ENCODE measurements at regions of chr1 and their contacts with region 1.

Region 1: GRCh38 chr1:66764994-66765578 is 12.8 kb downstream of the DYNLT5 start:
- DNase-seq: peak in 12 of 14 experiments; percentile 22 to 76 (median 44)
- ATAC-seq: peak; percentile 69
- H3K4me3 ChIP-seq: no peak overlapping the region
- H3K4me3 Mint-ChIP-seq: no peak overlapping the region
- H3K27ac ChIP-seq: no peak overlapping the region
- H3K27ac Mint-ChIP-seq: no peak overlapping the region
- H3K4me1 ChIP-seq: peaks cover 2% of the 10 kb centered on the region
- H3K4me1 Mint-ChIP-seq: peaks cover 15% of the 10 kb centered on the region
- H3K27me3 ChIP-seq: no peaks in the 10 kb centered on the region
- H3K27me3 Mint-ChIP-seq: no peaks in the 10 kb centered on the region
- CTCF ChIP-seq: peak; percentile 86

Region 2: GRCh38 chr1:66831529-66832239 is 66.6 kb after region 1 on chr1:
- CTCF ChIA-PET with region 1: no interaction called
- POLR2A ChIA-PET with region 1: no interaction called
- intact Hi-C with region 1: loop called in 1 of 2 experiments (anchors 10 kb)
- DNase-seq: no peak
- ATAC-seq: no peak
- H3K4me3 ChIP-seq: no peak overlapping the region
- H3K4me3 Mint-ChIP-seq: no peak overlapping the region
- H3K27ac ChIP-seq: no peak overlapping the region
- H3K27ac Mint-ChIP-seq: no peak overlapping the region
- H3K4me1 ChIP-seq: no peaks in the 10 kb centered on the region
- H3K4me1 Mint-ChIP-seq: no peaks in the 10 kb centered on the region
- H3K27me3 ChIP-seq: no peaks in the 10 kb centered on the region
- H3K27me3 Mint-ChIP-seq: no peaks in the 10 kb centered on the region
- CTCF ChIP-seq: no peak

Region 3: GRCh38 chr1:66929999-66930822 is 165.1 kb after region 1 on chr1:
- CTCF ChIA-PET with region 1: no interaction called
- POLR2A ChIA-PET with region 1: interaction called, 15 read pairs
- intact Hi-C with region 1: loop called (anchors 5 to 10 kb)
- DNase-seq: peak; percentile 88 to 98 (median 94)
- ATAC-seq: peak; percentile 66
- H3K4me3 ChIP-seq: peak overlapping the region; percentile 93
- H3K4me3 Mint-ChIP-seq: peak overlapping the region; percentile 91
- H3K27ac ChIP-seq: peak overlapping the region; percentile 87 to 88
- H3K27ac Mint-ChIP-seq: peak overlapping the region; percentile 84
- H3K4me1 ChIP-seq: peaks cover 18% of the 10 kb centered on the region
- H3K4me1 Mint-ChIP-seq: peaks cover 74% of the 10 kb centered on the region
- H3K27me3 ChIP-seq: no peaks in the 10 kb centered on the region
- H3K27me3 Mint-ChIP-seq: no peaks in the 10 kb centered on the region
- CTCF ChIP-seq: peak; percentile 52

Region 4: GRCh38 chr1:66981679-66982078 is 216.6 kb after region 1 on chr1:
- CTCF ChIA-PET with region 1: no interaction called
- POLR2A ChIA-PET with region 1: interaction called, 3 read pairs
- intact Hi-C with region 1: loop called in 1 of 2 experiments (anchors 5 kb)
- DNase-seq: peak; percentile 18 to 87 (median 42)
- ATAC-seq: peak; percentile 93
- H3K4me3 ChIP-seq: peak overlapping the region; percentile 52
- H3K4me3 Mint-ChIP-seq: peak overlapping the region; percentile 66
- H3K27ac ChIP-seq: peak overlapping the region; percentile 5 to 78
- H3K27ac Mint-ChIP-seq: peak overlapping the region; percentile 89
- H3K4me1 ChIP-seq: no peaks in the 10 kb centered on the region
- H3K4me1 Mint-ChIP-seq: peaks cover 40% of the 10 kb centered on the region
- H3K27me3 ChIP-seq: no peaks in the 10 kb centered on the region
- H3K27me3 Mint-ChIP-seq: no peaks in the 10 kb centered on the region
- CTCF ChIP-seq: no peak

Region 5: DNA sequence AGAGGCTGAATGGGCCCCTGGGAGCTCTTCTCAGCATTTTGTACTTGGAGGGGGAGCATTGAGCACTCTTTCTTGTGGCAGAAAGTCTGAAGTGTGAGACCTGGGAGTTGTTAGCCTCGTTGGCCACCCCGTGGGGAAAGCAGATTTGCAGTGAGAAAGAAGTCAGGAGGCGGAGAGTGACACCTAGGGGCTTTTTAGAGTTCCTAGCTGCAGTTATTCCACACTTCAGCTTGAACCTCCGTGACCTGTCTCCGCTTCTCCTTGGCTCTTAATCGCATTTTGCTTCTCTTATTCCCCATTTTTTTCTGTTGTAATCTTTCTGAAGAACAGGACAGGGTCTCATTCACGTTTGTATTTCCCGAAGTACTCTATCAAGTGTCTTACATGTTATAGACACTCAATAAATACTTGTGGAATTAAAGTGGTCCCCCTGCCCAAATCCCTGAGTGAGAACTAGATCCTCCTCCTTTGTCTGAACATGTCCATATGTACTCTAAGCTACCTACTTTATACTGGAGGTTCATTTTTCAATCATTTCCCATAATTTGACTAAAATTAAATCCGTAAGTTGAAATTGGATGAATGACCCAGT is 384.2 kb after region 1 on chr1:
- CTCF ChIA-PET with region 1: interaction called, 19 read pairs
- POLR2A ChIA-PET with region 1: interaction called, 6 read pairs
- intact Hi-C with region 1: loop called (anchors 1 kb)
- DNase-seq: peak; percentile 32 to 83 (median 56)
- ATAC-seq: peak; percentile 93
- H3K4me3 ChIP-seq: no peak overlapping the region
- H3K4me3 Mint-ChIP-seq: no peak overlapping the region
- H3K27ac ChIP-seq: no peak overlapping the region
- H3K27ac Mint-ChIP-seq: no peak overlapping the region
- H3K4me1 ChIP-seq: peaks cover 9% of the 10 kb centered on the region
- H3K4me1 Mint-ChIP-seq: peaks cover 31% of the 10 kb centered on the region
- H3K27me3 ChIP-seq: no peaks in the 10 kb centered on the region
- H3K27me3 Mint-ChIP-seq: no peaks in the 10 kb centered on the region
- CTCF ChIP-seq: peak; percentile 85

Region 6: DNA sequence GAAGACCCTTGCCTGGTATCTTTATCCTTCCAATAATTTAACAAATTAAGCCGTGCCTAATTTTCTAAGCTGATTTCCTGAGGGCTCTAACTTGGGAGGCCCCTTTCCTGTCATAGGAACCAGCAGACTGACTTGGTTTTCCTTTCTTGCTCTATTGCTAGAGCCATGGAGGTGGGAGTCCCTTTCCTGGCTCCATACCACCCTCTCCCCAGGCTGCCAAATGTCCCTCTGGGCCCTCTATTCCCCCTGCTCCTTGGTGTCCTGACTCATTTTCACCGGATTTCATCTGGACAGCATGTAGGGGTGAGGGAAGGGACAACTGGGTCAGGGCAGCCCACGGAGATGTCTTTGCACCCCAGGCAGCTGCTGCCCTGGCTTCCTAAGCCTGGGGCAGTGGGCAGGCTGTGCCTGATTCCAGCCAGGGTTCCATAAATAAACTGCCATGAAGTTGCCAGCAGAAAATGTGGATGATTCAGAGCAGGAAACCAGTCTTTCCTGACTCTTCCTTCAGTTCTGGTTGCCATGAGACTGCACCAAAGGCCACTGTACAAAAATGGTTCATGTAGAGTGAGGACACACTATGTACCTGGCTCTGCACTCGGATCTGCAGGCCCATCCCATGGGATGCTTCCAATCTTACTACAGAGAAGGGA is 703.1 kb after region 1 on chr1:
- CTCF ChIA-PET with region 1: no interaction called
- POLR2A ChIA-PET with region 1: no interaction called
- intact Hi-C with region 1: no loop called
- DNase-seq: no peak
- ATAC-seq: no peak
- H3K4me3 ChIP-seq: no peak overlapping the region
- H3K4me3 Mint-ChIP-seq: no peak overlapping the region
- H3K27ac ChIP-seq: no peak overlapping the region
- H3K27ac Mint-ChIP-seq: no peak overlapping the region
- H3K4me1 ChIP-seq: no peaks in the 10 kb centered on the region
- H3K4me1 Mint-ChIP-seq: no peaks in the 10 kb centered on the region
- H3K27me3 ChIP-seq: no peaks in the 10 kb centered on the region
- H3K27me3 Mint-ChIP-seq: no peaks in the 10 kb centered on the region
- CTCF ChIP-seq: no peak

Region 7: GRCh38 chr1:67500413-67500959 is 735.4 kb after region 1 on chr1:
- CTCF ChIA-PET with region 1: interaction called, 13 read pairs
- POLR2A ChIA-PET with region 1: no interaction called
- intact Hi-C with region 1: loop called (anchors 1 kb)
- DNase-seq: peak; percentile 73 to 92 (median 81)
- ATAC-seq: peak; percentile 100
- H3K4me3 ChIP-seq: no peak overlapping the region
- H3K4me3 Mint-ChIP-seq: no peak overlapping the region
- H3K27ac ChIP-seq: no peak overlapping the region
- H3K27ac Mint-ChIP-seq: no peak overlapping the region
- H3K4me1 ChIP-seq: peaks cover 7% of the 10 kb centered on the region
- H3K4me1 Mint-ChIP-seq: no peaks in the 10 kb centered on the region
- H3K27me3 ChIP-seq: peaks cover 0 to 3% of the 10 kb centered on the region in 2 experiments
- H3K27me3 Mint-ChIP-seq: no peaks in the 10 kb centered on the region
- CTCF ChIP-seq: peak; percentile 99